WTC11 (cell line): ENCODE measurements at regions of chr1 and their contacts with region 1.

Region 1: DNA sequence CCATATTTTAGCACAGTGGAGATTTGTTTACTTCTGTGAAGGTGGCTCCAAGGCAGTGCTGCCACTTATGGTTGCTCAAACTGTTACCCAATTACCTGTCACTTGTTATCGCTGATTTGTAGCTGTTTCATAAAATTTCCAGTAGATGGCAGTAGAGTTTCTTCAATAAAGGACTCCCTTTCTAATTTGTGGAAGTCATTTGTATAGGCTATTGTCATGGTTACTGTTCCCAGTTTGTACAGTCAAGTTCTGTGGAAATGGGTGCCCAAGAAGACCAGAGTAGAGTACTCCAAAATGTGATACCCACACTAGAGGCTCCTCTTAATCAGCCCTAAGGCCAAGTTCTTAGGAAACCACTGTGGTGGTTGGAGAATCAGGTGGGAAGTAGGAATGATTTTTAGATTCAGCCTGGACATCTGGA is 186.1 kb downstream of the CLEC20A start:
- DNase-seq: no peak
- ATAC-seq: peak; percentile 88
- H3K4me3 Mint-ChIP-seq: no peak overlapping the region
- H3K27ac Mint-ChIP-seq: peak overlapping the region; percentile 73; the same call in 1 of the 2 replicates
- H3K4me1 Mint-ChIP-seq: peaks cover 16% of the 10 kb centered on the region
- H3K27me3 Mint-ChIP-seq: no peaks in the 10 kb centered on the region
- CTCF ChIP-seq: peak; percentile 59; the same call in 1 of the 2 replicates

Region 2: DNA sequence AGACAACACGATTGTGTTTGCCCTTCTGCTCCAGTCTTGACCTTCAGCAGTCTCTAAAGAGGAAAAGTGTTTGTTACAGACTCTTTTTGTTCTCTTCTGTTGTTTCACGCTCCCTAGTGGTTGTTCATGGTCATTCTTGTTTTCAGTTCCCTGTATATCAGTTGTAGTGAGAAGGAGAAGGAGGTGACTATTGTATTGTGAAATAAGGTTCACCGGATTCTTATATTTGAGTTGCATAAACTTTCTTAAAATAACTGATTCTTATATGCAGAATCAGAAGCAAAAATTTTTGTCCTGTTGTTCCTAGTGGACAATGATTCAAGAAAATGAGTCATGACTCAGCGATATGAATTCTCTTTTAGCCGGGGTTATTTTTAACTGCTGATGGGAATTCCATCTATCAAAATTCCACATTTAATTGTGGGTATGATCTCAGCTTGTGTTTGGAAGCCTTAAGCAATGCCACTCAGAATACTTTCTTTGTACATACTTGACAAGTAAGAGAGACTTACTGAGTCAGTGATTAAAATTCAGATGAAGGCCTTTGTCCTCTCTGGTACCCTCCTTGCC is 33.9 kb after region 1 on chr1:
- CTCF ChIA-PET with region 1: interaction called, 11 read pairs
- POLR2A ChIA-PET with region 1: no interaction called
- DNase-seq: no peak
- ATAC-seq: peak; percentile 62
- H3K4me3 Mint-ChIP-seq: peak overlapping the region; percentile 42
- H3K27ac Mint-ChIP-seq: peak overlapping the region; percentile 76
- H3K4me1 Mint-ChIP-seq: peaks cover 54% of the 10 kb centered on the region
- H3K27me3 Mint-ChIP-seq: no peaks in the 10 kb centered on the region
- CTCF ChIP-seq: 0 out of 2 replicates have a peak, but pooled peaks have one; percentile 19

Region 3: DNA sequence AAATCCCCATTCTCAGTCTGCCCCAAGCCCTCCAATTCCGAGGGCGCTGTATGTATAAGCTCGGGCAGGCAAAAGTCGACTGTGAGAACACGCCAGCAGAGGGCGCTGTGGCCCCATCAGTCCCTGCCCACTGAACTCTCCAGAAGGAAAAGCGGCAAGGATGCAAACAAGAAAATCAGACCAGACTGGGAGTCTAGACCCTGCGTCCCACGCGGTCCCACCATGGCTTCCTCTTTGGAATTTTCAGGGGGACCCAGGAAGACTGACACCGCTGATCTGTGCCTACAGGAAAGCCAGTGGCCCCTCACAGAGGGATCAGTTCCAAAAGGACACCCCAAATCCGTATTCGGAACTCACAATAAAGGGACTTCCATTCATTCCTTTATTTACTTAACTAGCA is 221.7 kb after region 1 on chr1:
- CTCF ChIA-PET with region 1: interaction called, 10 read pairs
- POLR2A ChIA-PET with region 1: no interaction called
- DNase-seq: peak; percentile 88
- ATAC-seq: peak; percentile 89
- H3K4me3 Mint-ChIP-seq: no peak overlapping the region
- H3K27ac Mint-ChIP-seq: no peak overlapping the region
- H3K4me1 Mint-ChIP-seq: 0 out of 2 replicates have a peak, but pooled peaks cover 2% of the 10 kb centered on the region
- H3K27me3 Mint-ChIP-seq: no peaks in the 10 kb centered on the region; the same call in 1 of the 2 replicates
- CTCF ChIP-seq: peak; percentile 96